ENCODE measurements at regions of chr6 and their contacts with region 1.

Region 1: GRCh38 chr6:84353459-84354423 is 126.3 kb upstream of the CEP162 start:
- DNase-seq: no peak
- H3K4me3 ChIP-seq: no peak overlapping the region
- H3K27ac ChIP-seq: no peak overlapping the region
- H3K4me1 ChIP-seq: no peaks in the 10 kb centered on the region
- H3K27me3 ChIP-seq: no peaks in the 10 kb centered on the region
- CTCF ChIP-seq: no peak
- POLR2A ChIP-seq: no peak

Region 2: GRCh38 chr6:84332139-84333034 is 21.4 kb before region 1 on chr6:
- intact Hi-C with region 1: loop called (anchors 2 kb)
- DNase-seq: no peak
- H3K4me3 ChIP-seq: no peak overlapping the region
- H3K27ac ChIP-seq: no peak overlapping the region
- H3K4me1 ChIP-seq: no peaks in the 10 kb centered on the region
- H3K27me3 ChIP-seq: no peaks in the 10 kb centered on the region
- CTCF ChIP-seq: no peak
- POLR2A ChIP-seq: no peak

Measured in breast epithelium (tissue), 4 donors.